Activated CD4-positive, alpha-beta memory T cell treated with anti-CD3 and anti-CD28 coated beads for 36 hours (primary cell): ENCODE measurements at regions of chr17 and their contacts with region 1.

Region 1: DNA sequence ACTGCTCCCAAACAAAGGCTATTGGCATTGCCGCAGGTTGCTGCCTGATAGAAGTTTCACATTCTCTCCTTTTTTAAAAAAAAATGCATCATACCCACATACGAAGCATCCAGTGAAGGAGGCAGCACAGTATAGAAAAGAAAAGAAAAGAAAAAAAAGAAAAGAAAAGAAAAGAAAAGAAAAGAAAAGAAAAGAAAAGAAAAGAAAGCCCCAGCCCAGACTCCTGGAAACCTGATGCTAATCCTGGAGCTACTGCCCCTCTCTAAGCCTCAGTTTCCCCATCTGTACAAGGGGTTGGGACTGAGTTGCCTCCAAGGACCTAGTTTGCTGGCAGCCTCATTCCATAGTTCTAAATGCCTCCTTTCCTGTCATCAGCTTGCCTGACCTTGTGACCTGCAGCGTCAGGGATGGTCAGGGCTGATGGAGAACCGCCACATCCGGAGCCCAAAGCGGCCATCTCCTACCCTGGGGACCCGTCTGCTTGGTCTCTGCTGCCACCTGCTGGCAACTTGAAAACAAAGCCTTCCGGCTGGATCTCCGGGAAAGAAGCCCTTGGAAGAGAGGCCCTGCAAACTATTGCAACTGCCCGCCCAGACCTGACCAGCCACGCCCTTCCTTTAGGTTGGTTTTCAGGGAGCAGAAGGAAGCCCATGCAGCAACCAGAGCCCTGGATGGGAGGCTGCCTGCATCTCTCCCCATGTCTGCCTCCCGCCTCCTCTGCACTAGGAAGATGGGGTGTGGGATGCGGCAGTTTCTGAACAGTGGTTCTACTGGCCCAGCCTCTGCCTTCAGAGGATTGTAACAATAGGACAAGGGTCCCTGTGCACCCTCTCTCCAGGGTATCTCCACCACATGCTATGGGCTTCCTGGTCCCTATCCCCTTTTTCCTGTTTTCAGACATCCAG is 13.0 kb downstream of the AIPL1 start:
- DNase-seq: peak; percentile 83
- H3K4me3 Mint-ChIP-seq: no peak overlapping the region
- H3K27ac Mint-ChIP-seq: no peak overlapping the region
- H3K4me1 Mint-ChIP-seq: peaks cover 2% of the 10 kb centered on the region
- H3K27me3 Mint-ChIP-seq: peaks cover 23% of the 10 kb centered on the region

Region 2: DNA sequence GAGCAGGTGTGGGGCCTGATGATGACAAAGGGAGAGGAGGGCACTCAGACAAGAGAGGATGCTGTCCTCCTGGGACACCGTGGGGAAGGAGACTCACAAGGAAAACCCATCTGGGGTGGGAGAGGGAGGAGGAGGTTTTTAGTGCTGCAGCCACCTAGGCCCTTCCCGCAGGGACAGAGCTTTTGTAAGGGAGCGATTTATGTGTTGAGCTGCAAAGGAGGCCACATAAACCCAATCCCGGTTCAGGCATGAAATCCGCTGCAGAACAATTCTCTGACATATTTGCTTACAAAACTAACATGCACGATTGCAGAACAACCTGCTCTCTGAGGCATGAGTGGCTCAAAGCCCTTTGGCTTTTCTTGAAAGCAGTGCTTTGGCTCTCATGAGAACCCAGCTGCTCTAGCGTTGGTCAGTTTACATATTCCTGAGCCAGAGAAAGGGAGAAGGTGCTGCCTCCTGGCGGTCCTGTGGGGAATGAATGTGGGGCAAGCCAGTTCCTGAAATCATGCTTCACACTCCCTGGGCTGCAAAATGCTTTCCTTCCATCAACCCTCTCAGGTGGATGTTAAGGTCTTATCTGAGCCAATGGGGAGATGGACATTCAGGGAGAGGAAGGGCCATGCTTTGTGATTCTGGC is 715.3 kb before region 1 on chr17:
- CTCF ChIA-PET with region 1: interaction called, 7 read pairs
- POLR2A ChIA-PET with region 1: no interaction called
- intact Hi-C with region 1: loop called (anchors 5 kb)
- DNase-seq: peak; percentile 72
- H3K4me3 Mint-ChIP-seq: no peak overlapping the region
- H3K27ac Mint-ChIP-seq: no peak overlapping the region
- H3K4me1 Mint-ChIP-seq: no peaks in the 10 kb centered on the region
- H3K27me3 Mint-ChIP-seq: peaks cover 15% of the 10 kb centered on the region

Region 3: GRCh38 chr17:6435968-6436367 is 14.0 kb after region 1 on chr17:
- CTCF ChIA-PET with region 1: interaction called, 17 read pairs
- POLR2A ChIA-PET with region 1: no interaction called
- intact Hi-C with region 1: no loop called
- DNase-seq: peak; percentile 72
- H3K4me3 Mint-ChIP-seq: no peak overlapping the region
- H3K27ac Mint-ChIP-seq: no peak overlapping the region
- H3K4me1 Mint-ChIP-seq: peaks cover 2% of the 10 kb centered on the region
- H3K27me3 Mint-ChIP-seq: peaks cover 17% of the 10 kb centered on the region